AG04450 (cell line): ENCODE measurements at regions of chr1 and their contacts with region 1.

Region 1: GRCh38 chr1:95233737-95234500 is at the start of gene RWDD3:
- DNase-seq: peak; percentile 61
- H3K4me3 ChIP-seq: peak within 1 kb of the TSS; percentile 83
- H3K27ac ChIP-seq: peak within 1 kb of the TSS; percentile 50
- H3K27me3 ChIP-seq: no peaks in the 10 kb centered on the region
- CTCF ChIP-seq: peak; percentile 58
- polyA plus RNA-seq, gene RWDD3: 17.6 and 24.6 TPM in 2 replicates

Region 2: DNA sequence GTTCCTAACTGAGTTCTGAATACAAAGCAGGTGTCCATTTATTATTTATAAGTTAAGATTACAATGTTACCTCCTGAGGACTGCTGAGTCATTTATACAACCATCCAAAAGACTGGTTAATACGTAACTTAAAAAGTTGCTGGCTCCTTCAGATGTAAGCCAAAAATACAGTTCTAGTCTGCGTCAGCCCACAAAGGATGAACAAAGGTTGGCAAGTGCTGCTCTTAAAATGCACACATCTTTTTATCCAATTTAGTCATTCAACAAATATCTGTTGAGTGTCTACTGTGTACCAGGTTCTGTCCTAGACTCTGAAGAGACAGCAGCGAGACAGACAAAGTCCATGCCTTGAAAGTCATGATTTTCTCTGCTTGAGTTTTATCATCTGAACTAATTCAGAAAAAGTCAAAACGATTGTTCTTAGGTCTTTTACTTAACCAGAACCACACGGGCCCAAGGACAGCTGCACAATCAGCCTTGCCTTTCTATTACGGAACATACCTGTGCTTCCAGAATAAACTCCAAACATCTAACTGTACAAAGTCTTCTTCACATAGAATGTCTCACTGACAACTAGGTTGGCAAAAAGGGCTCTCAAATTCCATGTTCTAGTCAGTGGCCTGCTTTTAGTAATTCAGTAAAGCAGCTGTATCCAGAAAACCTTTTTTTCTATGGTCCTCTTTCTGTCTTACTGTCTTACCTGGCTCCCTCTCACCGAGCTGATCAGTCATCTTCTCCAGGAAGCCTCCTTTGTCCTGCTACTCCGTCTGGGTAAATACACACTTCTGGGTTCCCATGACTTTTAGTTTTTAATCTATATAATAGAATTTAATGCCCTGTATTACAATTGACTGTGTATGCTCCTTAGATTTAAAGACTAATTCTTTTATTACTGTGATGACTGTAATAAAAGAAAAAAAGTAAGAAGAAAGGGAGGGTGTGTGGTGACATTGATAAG is 291.5 kb before region 1 on chr1:
- CTCF ChIA-PET with region 1: no interaction called
- POLR2A ChIA-PET with region 1: no interaction called
- DNase-seq: no peak
- H3K4me3 ChIP-seq: no peak overlapping the region
- H3K27ac ChIP-seq: no peak overlapping the region
- H3K27me3 ChIP-seq: no peaks in the 10 kb centered on the region
- CTCF ChIP-seq: no peak

Region 3: DNA sequence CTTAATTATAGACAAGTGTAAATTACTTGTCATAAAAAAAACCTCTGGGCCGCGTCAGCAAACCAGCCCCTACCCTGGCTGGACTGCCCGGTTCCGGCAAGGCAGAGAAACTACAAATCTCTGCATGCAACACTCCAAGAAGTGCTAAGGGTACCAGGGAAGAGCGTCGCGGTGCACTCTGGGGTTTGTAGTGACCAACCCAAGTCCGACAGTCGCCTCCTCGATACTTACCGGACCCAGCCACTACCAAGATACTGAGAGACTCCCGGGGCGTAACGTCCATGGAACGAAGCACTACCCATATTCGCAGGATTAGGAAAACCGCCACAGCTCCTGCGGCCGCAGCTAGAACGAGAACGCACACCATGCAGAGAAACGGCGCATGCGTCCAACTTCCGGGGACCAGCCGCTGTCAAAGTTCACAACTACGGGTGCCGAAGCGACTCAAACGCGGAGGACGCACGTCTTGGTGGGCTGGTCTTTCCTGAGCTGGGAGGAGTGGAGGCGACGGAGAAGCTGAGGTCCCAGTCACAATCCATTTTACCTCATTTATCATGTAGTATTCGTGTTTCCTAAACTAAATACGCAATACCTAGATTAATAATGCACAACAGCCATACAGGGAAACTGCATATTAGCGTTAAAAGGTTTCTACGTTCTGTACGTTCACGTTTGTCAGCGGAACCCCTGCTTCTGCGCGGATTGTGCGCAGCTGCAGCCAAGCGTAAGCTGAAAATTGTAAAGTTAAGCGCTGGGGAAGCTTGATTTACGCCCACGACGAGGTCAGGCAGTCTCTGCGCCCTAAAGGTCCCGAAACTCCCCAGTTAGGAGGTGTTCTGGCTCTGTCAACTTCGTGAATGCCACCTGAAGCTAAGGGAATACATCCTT is 161.1 kb before region 1 on chr1 and contains the start of gene ALG14:
- CTCF ChIA-PET with region 1: interaction called, 44 read pairs
- POLR2A ChIA-PET with region 1: interaction called, 16 read pairs
- DNase-seq: peak; percentile 89
- H3K4me3 ChIP-seq: peak within 1 kb of the TSS; percentile 87
- H3K27ac ChIP-seq: peak within 1 kb of the TSS; percentile 70
- H3K27me3 ChIP-seq: no peaks in the 10 kb centered on the region
- CTCF ChIP-seq: no peak
- polyA plus RNA-seq, gene ALG14: 2.6 and 3.1 TPM in 2 replicates

Region 4: GRCh38 chr1:95111014-95111413 is 122.9 kb before region 1 on chr1:
- CTCF ChIA-PET with region 1: interaction called, 24 read pairs
- POLR2A ChIA-PET with region 1: no interaction called
- DNase-seq: no peak
- H3K4me3 ChIP-seq: no peak overlapping the region
- H3K27ac ChIP-seq: no peak overlapping the region
- H3K27me3 ChIP-seq: peaks cover 3% of the 10 kb centered on the region
- CTCF ChIP-seq: no peak

Region 5: GRCh38 chr1:95154096-95154495 is 79.8 kb before region 1 on chr1:
- CTCF ChIA-PET with region 1: interaction called, 11 read pairs
- POLR2A ChIA-PET with region 1: no interaction called
- DNase-seq: no peak
- H3K4me3 ChIP-seq: no peak overlapping the region
- H3K27ac ChIP-seq: no peak overlapping the region
- H3K27me3 ChIP-seq: no peaks in the 10 kb centered on the region
- CTCF ChIP-seq: no peak

Region 6: GRCh38 chr1:95223110-95223509 is 10.8 kb before region 1 on chr1:
- CTCF ChIA-PET with region 1: interaction called, 61 read pairs
- POLR2A ChIA-PET with region 1: interaction called, 8 read pairs
- DNase-seq: peak; percentile 13
- H3K4me3 ChIP-seq: no peak overlapping the region
- H3K27ac ChIP-seq: no peak overlapping the region
- H3K27me3 ChIP-seq: no peaks in the 10 kb centered on the region
- CTCF ChIP-seq: no peak

Region 7: DNA sequence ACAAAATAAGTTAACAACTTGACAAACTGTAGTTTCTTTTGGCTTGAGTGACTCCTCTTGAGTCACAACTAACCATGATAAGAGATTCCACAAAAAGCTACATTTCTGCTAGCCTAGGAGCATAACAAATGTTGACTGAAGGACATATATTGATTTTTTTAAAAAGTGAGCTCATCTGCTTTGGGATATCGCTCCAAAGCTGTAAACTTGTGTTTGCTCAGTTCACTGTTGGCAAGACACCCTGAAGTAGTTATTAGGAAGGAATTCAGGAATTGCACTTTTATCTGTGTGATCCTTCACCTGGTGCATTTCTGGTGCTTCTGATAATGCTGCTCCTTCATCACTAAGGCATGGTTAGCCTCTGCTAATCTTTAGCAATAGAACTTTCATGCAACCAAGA is 23.8 kb after region 1 on chr1:
- CTCF ChIA-PET with region 1: interaction called, 13 read pairs
- POLR2A ChIA-PET with region 1: no interaction called
- DNase-seq: no peak
- H3K4me3 ChIP-seq: no peak overlapping the region
- H3K27ac ChIP-seq: no peak overlapping the region
- H3K27me3 ChIP-seq: no peaks in the 10 kb centered on the region
- CTCF ChIP-seq: no peak

Region 8: DNA sequence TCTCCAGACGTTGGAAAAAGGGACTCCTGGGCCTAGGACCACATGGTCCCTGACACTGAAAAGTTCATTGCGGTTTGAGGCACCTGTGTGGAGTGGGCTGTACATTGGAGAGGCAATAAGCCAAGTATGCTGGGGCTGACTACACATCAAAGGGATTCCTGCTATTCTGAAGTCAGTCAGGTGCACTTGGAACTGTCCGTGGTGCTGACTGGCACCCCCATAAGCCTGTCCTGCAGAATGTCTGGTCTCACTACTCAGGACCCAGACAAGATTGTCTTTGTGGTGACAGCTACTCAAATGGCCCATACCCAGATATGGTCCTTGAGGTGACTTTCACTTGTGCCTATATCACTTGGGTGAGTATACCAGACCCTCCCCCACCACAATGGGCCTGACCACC is 150.6 kb after region 1 on chr1:
- CTCF ChIA-PET with region 1: no interaction called
- POLR2A ChIA-PET with region 1: no interaction called
- DNase-seq: no peak
- H3K4me3 ChIP-seq: no peak overlapping the region
- H3K27ac ChIP-seq: no peak overlapping the region
- H3K27me3 ChIP-seq: no peaks in the 10 kb centered on the region
- CTCF ChIP-seq: no peak

Region 9: GRCh38 chr1:95685081-95685480 is 451.2 kb after region 1 on chr1:
- CTCF ChIA-PET with region 1: no interaction called
- POLR2A ChIA-PET with region 1: no interaction called
- DNase-seq: no peak
- H3K4me3 ChIP-seq: no peak overlapping the region
- H3K27ac ChIP-seq: no peak overlapping the region
- H3K27me3 ChIP-seq: no peaks in the 10 kb centered on the region
- CTCF ChIP-seq: no peak